ENCODE measurements at regions of chr11 and their contacts with region 1.

Region 1: DNA sequence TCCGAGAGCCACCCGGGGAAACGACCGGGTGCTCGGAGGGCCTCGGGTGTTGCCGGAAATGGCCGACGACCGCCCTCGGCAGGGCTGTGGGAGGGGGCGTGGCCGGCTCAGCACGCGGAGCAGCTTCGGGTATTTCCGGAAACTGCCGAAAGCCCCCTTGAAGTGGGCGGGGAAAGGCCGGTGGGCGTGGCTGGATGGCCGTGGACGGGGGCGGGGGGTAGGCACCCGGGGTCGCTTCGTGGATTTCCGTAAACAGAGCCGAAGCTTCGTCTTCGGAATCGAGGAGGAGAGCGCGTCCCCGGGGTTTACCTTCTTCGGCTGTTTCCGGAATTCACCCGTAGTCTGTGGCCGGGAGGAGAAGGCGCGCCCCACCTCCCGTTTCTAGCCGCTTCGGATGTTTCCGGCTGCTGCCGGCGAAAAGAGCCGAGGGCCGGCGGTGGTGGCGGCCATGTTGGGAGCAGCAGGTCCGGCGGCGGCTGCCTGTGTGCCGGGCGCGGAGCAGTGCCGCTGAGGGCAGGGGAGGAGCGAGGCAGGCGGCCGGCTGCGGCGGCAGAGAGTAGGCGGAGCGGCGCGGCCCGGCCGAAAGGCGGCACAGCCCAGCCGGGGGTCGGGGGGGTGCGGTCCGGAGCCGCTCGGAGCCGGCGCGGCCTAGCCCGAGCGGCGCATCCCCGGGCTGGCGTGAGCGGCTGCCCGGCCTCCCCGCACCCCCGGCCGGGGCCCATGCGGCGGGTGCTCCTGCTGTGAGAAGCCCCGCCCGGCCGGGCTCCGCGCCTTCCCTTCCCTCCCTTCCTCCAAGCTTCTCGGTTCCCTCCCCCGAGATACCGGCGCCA is at the start of gene MARK2:
- DNase-seq: peak; percentile 100
- ATAC-seq: peak; percentile 91
- H3K4me3 Mint-ChIP-seq: peak within 1 kb of the TSS; percentile 86
- H3K27ac Mint-ChIP-seq: peak within 1 kb of the TSS; percentile 85
- H3K4me1 Mint-ChIP-seq: peaks cover 62% of the 10 kb centered on the region
- H3K27me3 Mint-ChIP-seq: no peaks in the 10 kb centered on the region
- total RNA-seq, gene MARK2: 62.1 to 68.6 TPM

Region 2: DNA sequence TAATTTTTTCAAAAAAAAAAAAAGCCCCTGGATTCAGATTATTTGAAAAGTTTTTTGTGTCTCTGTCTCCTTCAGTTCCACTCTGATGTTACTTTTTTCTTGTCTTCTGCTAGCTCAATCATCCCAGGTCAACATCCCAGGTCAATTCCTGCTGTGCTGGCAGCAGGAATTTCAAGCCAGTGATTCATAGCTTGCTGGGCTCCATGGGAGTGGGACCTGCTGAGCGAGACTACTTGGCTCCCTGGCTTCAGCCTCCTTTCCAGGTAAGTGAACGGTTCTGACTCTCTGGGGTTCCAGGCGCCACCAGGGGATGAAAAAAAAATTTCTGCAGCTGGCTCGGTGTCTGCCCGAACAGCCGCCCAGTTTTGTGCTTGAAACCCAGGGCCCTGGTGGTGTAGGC is 379.3 kb before region 1 on chr11:
- CTCF ChIA-PET with region 1: no interaction called
- POLR2A ChIA-PET with region 1: no interaction called
- DNase-seq: no peak
- ATAC-seq: no peak
- H3K4me3 Mint-ChIP-seq: no peak overlapping the region
- H3K27ac Mint-ChIP-seq: no peak overlapping the region
- H3K4me1 Mint-ChIP-seq: no peaks in the 10 kb centered on the region
- H3K27me3 Mint-ChIP-seq: peaks cover 8% of the 10 kb centered on the region

Region 3: GRCh38 chr11:63862923-63863322 is 24.0 kb after region 1 on chr11:
- CTCF ChIA-PET with region 1: interaction called, 12 read pairs
- POLR2A ChIA-PET with region 1: interaction called, 4 read pairs
- DNase-seq: peak; percentile 31
- ATAC-seq: peak; percentile 72
- H3K4me3 Mint-ChIP-seq: no peak overlapping the region
- H3K27ac Mint-ChIP-seq: peak overlapping the region; percentile 82
- H3K4me1 Mint-ChIP-seq: peaks cover 61% of the 10 kb centered on the region
- H3K27me3 Mint-ChIP-seq: no peaks in the 10 kb centered on the region

Region 4: GRCh38 chr11:63888170-63889086 is 49.5 kb after region 1 on chr11:
- CTCF ChIA-PET with region 1: interaction called, 111 read pairs
- POLR2A ChIA-PET with region 1: interaction called, 4 read pairs
- DNase-seq: peak; percentile 83
- ATAC-seq: peak; percentile 85
- H3K4me3 Mint-ChIP-seq: peak overlapping the region; percentile 93
- H3K27ac Mint-ChIP-seq: peak overlapping the region; percentile 94
- H3K4me1 Mint-ChIP-seq: peaks cover 72% of the 10 kb centered on the region
- H3K27me3 Mint-ChIP-seq: no peaks in the 10 kb centered on the region

Region 5: GRCh38 chr11:63933459-63933858 is 94.6 kb after region 1 on chr11:
- CTCF ChIA-PET with region 1: interaction called, 10 read pairs
- POLR2A ChIA-PET with region 1: interaction called, 5 read pairs
- DNase-seq: no peak
- ATAC-seq: no peak
- H3K4me3 Mint-ChIP-seq: no peak overlapping the region
- H3K27ac Mint-ChIP-seq: no peak overlapping the region
- H3K4me1 Mint-ChIP-seq: peaks cover 11% of the 10 kb centered on the region
- H3K27me3 Mint-ChIP-seq: peaks cover 2% of the 10 kb centered on the region

Region 6: GRCh38 chr11:63951779-63952536 is 113.1 kb after region 1 on chr11:
- CTCF ChIA-PET with region 1: interaction called, 188 read pairs
- POLR2A ChIA-PET with region 1: no interaction called
- DNase-seq: peak; percentile 83
- ATAC-seq: peak; percentile 90
- H3K4me3 Mint-ChIP-seq: peak overlapping the region; percentile 60
- H3K27ac Mint-ChIP-seq: peak overlapping the region; percentile 76
- H3K4me1 Mint-ChIP-seq: peaks cover 33% of the 10 kb centered on the region
- H3K27me3 Mint-ChIP-seq: no peaks in the 10 kb centered on the region

Region 7: GRCh38 chr11:64152841-64153691 is 314.2 kb after region 1 on chr11:
- CTCF ChIA-PET with region 1: interaction called, 33 read pairs
- POLR2A ChIA-PET with region 1: no interaction called
- DNase-seq: peak; percentile 79
- ATAC-seq: peak; percentile 96
- H3K4me3 Mint-ChIP-seq: no peak overlapping the region
- H3K27ac Mint-ChIP-seq: no peak overlapping the region
- H3K4me1 Mint-ChIP-seq: peaks cover 5% of the 10 kb centered on the region
- H3K27me3 Mint-ChIP-seq: peaks cover 3% of the 10 kb centered on the region